H1 (cell line): ENCODE measurements at regions of chr6 and their contacts with region 1.

Region 1: DNA sequence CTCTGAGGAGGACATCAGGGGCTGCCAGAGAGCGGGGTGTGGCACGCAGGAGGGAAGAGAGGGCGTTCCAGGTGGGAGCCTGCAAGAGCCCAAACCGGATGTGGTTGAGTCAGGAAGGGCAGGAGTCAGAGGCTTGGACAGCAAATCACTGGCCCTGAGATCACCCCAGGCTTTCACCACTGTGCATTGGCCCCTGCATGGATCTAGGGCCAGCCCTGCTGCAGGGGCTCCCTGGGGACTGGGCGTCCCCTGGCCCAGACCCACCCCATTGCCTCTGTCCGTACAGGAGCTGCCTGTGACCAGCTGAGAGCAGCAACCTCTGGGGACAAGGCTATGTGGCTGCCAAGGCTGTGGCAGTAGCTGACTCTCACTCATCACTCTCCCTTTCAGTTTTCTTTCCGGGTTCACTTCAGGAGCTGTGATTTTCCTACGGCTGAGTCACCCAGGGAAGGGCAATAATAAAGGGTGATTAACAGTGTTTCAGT is 33.9 kb downstream of the KCNK17 start:
- DNase-seq: no peak
- H3K4me3 ChIP-seq: no peak overlapping the region
- H3K27ac ChIP-seq: no peak overlapping the region
- H3K4me1 ChIP-seq: peaks cover 0 to 4% (median 1%) of the 10 kb centered on the region in 4 experiments; a peak in 2 of 7 replicates
- H3K27me3 ChIP-seq: 0 out of 7 replicates have a peak, but pooled peaks cover 0 to 2% (median 0%) of the 10 kb centered on the region in 4 experiments
- CTCF ChIP-seq: no peak
- EP300 ChIP-seq: no peak
- POLR2A ChIP-seq: no peak
- RAD21 ChIP-seq: no peak

Region 2: DNA sequence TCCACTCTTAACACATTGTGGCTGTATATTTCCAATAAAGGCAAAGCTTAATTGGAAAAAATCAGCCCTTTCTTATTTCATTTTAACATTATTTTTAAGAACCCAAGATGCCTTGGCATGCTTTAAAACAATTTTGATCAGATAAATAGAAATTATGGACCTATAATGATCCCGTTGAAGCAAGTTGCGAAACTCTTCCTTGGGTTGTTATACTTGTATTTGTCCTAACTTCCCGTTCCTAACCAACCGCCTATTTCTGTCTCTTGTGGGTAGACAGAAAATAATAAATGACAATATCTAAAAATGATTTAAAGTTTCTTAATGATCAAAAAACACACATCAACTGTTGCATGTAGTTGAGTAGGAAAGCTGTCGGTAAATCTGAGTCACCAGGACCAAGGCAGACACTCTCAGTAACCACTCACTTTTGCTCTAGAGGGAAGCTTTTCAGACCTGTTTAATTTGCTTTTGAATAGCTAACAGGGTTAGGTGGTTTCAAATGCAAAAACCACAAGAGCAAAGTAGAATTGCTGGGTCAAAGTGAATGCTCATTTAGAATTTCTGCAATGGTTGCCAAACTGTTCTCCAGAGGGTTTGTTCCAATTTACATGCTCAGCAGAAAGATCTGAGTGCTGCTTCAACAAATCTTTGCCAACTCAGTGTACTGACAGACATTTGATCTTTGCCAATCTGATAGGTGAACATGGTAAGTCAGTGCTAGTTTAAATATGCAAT is 16.8 kb before region 1 on chr6:
- CTCF ChIA-PET with region 1: interaction called, 13 read pairs
- POLR2A ChIA-PET with region 1: interaction called, 3 read pairs
- DNase-seq: peak in 1 of 2 experiments; percentile 25
- H3K4me3 ChIP-seq: peak overlapping the region in 1 of 4 experiments; percentile 43; a peak in 1 of 8 replicates
- H3K27ac ChIP-seq: peak overlapping the region; percentile 47; the same call in 1 of the 2 replicates
- H3K4me1 ChIP-seq: peaks cover 0 to 10% (median 7%) of the 10 kb centered on the region in 4 experiments; a peak in 5 of 7 replicates
- H3K27me3 ChIP-seq: no peaks in the 10 kb centered on the region
- CTCF ChIP-seq: no peak
- EP300 ChIP-seq: no peak
- POLR2A ChIP-seq: no peak
- RAD21 ChIP-seq: 0 out of 4 replicates have a peak, but pooled peaks of 1 of the 2 experiments have one; percentile 2